Ascending aorta (tissue), 2 donors: ENCODE measurements at regions of chr1 and their contacts with region 1.

Region 1: GRCh38 chr1:33472349-33472980 is at the start of gene ZSCAN20:
- DNase-seq: peak; percentile 94 to 99
- H3K4me3 ChIP-seq: peak within 1 kb of the TSS; percentile 68 to 73
- H3K27ac ChIP-seq: peak within 1 kb of the TSS; percentile 89 to 90
- H3K4me1 ChIP-seq: peaks cover 3 to 27% of the 10 kb centered on the region in 2 donors
- H3K27me3 ChIP-seq: no peaks in the 10 kb centered on the region
- CTCF ChIP-seq: no peak
- total RNA-seq, gene ZSCAN20: 42.6 TPM

Region 2: GRCh38 chr1:31587720-31588394 is 1884.6 kb before region 1 on chr1:
- intact Hi-C with region 1: loop called (anchors 5 kb)
- DNase-seq: peak; percentile 70 to 94
- H3K4me3 ChIP-seq: peak overlapping the region; percentile 46 to 56
- H3K27ac ChIP-seq: peak overlapping the region; percentile 93 to 97
- H3K4me1 ChIP-seq: peaks cover 45 to 77% of the 10 kb centered on the region in 2 donors
- H3K27me3 ChIP-seq: no peaks in the 10 kb centered on the region
- CTCF ChIP-seq: peak; percentile 28 to 69 (median 65)

Region 3: GRCh38 chr1:33181921-33182341 is 290.5 kb before region 1 on chr1 and contains the start of gene TRIM62:
- intact Hi-C with region 1: loop called (anchors 2 kb)
- DNase-seq: peak; percentile 27 to 92
- H3K4me3 ChIP-seq: peak within 1 kb of the TSS; percentile 79 to 87
- H3K27ac ChIP-seq: peak within 1 kb of the TSS; percentile 82 to 92
- H3K4me1 ChIP-seq: peaks cover 0 to 12% of the 10 kb centered on the region in 2 donors
- H3K27me3 ChIP-seq: no peaks in the 10 kb centered on the region
- CTCF ChIP-seq: no peak
- total RNA-seq, gene TRIM62: 18.1 TPM

Region 4: DNA sequence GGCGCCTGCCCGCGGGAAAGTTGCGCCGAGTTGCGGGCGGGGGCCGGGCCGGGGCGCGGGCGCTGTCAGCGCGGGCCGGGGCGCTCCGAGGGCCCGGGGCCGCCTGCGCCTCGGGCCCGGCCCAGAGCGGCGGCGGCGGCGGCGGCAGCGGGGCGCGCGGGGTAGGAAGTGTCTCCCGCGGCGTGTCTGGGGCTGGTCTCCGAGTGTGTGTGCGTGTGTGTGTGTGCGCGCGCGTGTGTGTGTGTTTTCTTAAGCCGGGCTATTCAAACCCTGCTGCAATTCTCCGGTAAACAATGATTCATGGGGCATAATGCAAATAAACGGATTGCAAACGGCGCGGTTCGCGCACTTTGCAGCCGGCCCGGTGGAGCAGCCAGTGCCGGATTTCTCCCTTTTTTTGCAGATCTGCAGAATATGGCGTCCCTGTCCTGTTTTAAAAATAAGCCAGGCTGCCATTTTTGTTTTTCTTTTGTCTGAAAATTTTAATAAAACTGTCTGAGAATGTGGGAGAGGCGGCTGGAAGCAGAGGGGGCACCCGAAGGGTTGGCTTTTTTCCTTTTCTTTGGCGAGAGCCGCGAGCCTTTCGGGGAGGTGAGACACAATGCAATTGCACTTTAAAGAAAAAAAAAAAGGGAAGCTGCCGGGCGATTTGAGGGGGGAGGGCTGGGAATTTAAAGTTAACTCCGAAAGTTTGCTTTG is 215.6 kb before region 1 on chr1:
- intact Hi-C with region 1: loop called (anchors 1 kb)
- DNase-seq: peak in 1 of 2 donors; percentile 76
- H3K4me3 ChIP-seq: peak overlapping the region; percentile 74 to 82
- H3K27ac ChIP-seq: peak overlapping the region; percentile 95 to 97
- H3K4me1 ChIP-seq: peaks cover 19 to 45% of the 10 kb centered on the region in 2 donors
- H3K27me3 ChIP-seq: no peaks in the 10 kb centered on the region
- CTCF ChIP-seq: no peak

Region 5: GRCh38 chr1:33289613-33290154 is 182.8 kb before region 1 on chr1:
- intact Hi-C with region 1: no loop called
- DNase-seq: no peak
- H3K4me3 ChIP-seq: no peak overlapping the region
- H3K27ac ChIP-seq: peak overlapping the region; percentile 47 to 63
- H3K4me1 ChIP-seq: peaks cover 0 to 23% of the 10 kb centered on the region in 2 donors
- H3K27me3 ChIP-seq: no peaks in the 10 kb centered on the region
- CTCF ChIP-seq: no peak

Region 6: DNA sequence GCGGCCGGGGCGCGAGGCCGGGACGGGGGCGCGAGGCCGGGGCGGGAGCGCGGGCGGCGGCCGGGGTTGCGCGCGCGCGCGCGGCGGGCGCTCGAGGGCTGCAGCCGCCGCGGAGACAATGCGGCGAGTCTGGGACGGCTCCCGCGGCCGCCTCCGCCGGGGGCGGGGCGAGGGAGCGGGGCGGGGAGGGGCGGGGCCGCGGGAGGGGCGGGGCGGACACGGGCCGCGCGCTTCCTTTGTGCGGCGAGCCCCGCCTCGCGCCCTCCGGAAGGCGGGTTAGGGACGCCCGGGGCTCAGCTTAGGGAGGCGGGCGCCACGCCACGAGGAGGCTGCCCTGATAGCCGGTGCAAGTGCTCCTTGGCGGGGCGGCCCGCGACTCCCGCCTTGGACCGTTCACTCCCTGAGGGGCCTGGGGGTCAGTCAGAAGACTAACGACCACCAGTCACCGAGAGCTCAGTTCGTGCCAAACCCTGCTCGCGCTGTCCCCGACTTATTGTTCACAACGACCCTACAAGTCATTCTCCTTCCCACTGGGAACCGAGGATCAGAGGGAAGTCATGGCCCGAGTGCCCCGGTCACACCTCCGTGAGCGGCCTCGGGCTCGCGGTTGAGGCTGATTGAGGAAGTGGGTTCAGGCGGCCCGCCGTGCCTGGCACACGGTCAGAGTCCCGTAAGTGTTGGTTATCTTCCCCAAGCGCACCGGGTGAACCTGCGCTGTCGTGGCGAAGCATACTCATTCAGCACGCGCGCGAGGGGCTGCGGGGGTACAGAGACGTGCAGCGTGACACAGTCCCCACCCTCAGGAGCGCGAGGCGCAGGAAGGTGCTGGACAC is 122.5 kb before region 1 on chr1:
- intact Hi-C with region 1: loop called (anchors 5 kb)
- DNase-seq: peak in 1 of 2 donors; percentile 93
- H3K4me3 ChIP-seq: peak overlapping the region; percentile 71 to 99
- H3K27ac ChIP-seq: peak overlapping the region; percentile 81 to 85
- H3K4me1 ChIP-seq: peaks cover 6 to 23% of the 10 kb centered on the region in 2 donors
- H3K27me3 ChIP-seq: no peaks in the 10 kb centered on the region
- CTCF ChIP-seq: no peak

Region 7: DNA sequence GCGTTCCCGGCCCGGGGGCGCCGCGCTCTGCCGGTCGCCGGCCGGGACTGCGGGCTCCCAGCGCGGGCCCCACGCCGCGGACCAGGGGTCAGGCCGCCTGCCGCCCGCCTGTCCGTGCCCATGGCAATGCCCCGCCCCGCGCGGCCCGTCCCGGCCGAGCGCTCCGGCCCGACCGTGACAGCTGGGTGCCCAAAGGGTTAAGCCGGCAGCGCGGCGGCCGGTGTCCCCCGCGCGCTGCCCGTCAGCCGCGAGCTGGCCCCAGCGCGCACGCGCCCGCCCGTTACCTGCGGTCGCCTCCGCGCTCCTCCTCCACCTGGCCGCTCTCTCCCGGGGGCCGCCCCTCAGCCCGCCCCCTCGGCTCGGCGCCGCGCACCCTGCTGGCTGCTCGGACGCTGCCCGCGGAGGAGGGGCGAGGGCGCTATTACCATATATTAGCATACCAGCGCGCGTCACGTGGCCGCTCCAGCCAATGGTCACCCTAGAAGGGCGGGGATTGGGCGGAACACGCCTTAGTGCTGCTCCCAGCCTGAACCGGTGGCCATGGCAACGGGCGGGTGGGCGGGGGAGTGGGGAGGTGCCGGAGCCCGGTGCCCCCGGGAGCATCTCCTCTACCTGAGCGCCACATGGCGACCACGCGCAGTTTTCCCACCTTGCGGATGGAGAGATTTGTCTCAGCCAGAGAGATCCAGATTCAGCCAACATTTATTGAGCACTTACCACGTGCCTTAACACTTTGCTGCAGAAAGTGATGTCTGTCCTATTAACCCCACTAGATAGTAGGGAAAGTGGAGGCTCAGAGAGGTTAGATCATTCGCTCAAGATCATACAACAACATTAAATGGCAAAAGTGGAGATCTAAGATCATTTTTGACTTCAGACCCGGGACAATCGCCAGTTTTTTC is 41.5 kb before region 1 on chr1 and contains the start of gene PHC2:
- intact Hi-C with region 1: loop called (anchors 1 kb)
- DNase-seq: peak; percentile 96 to 99
- H3K4me3 ChIP-seq: peak within 1 kb of the TSS; percentile 84 to 94
- H3K27ac ChIP-seq: peak within 1 kb of the TSS; percentile 45 to 51
- H3K4me1 ChIP-seq: no peaks in the 10 kb centered on the region
- H3K27me3 ChIP-seq: no peaks in the 10 kb centered on the region
- CTCF ChIP-seq: peak in 2 of 3 experiments; percentile 37 to 51
- total RNA-seq, gene PHC2: 222 TPM